Activated CD4-positive, alpha-beta memory T cell treated with anti-CD3 and anti-CD28 coated beads, Interleukin-2, amount 10 ng/mL, durations not matched to agents 7 days and 5 days (primary cell): ENCODE measurements at regions of chr13 and their contacts with region 1.

Region 1: GRCh38 chr13:77480066-77480465 is 55.4 kb upstream of the SCEL start:
- DNase-seq: no peak
- H3K4me3 Mint-ChIP-seq: no peak overlapping the region
- H3K27ac Mint-ChIP-seq: no peak overlapping the region
- H3K4me1 Mint-ChIP-seq: peaks cover 14% of the 10 kb centered on the region
- H3K27me3 Mint-ChIP-seq: peaks cover 12% of the 10 kb centered on the region

Region 2: GRCh38 chr13:77329133-77329910 is 150.7 kb before region 1 on chr13:
- CTCF ChIA-PET with region 1: interaction called, 47 read pairs
- POLR2A ChIA-PET with region 1: interaction called, 31 read pairs
- DNase-seq: peak; percentile 95
- H3K4me3 Mint-ChIP-seq: peak overlapping the region; percentile 95
- H3K27ac Mint-ChIP-seq: peak overlapping the region; percentile 99
- H3K4me1 Mint-ChIP-seq: peaks cover 40% of the 10 kb centered on the region
- H3K27me3 Mint-ChIP-seq: no peaks in the 10 kb centered on the region

Region 3: DNA sequence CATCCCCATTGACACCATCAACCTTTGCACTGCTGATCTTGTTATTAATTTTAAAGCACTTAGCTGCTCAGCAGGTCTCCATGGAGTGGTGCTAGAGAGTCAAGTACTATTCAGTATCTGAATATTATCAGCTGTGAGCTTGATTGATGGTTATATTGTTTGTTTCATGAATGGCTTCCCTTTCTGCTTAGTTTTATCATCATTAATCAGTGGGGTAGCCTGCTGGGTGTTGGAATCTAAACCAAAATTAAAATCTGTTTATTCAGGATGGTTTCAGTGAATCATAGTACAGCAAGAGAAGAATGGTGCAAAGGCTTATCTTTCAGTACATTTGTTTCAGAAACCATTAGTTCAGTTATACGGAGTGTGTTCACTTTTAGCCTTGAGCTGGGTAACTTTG is 12.9 kb after region 1 on chr13:
- CTCF ChIA-PET with region 1: interaction called, 13 read pairs
- POLR2A ChIA-PET with region 1: no interaction called
- DNase-seq: no peak
- H3K4me3 Mint-ChIP-seq: no peak overlapping the region
- H3K27ac Mint-ChIP-seq: no peak overlapping the region
- H3K4me1 Mint-ChIP-seq: peaks cover 3% of the 10 kb centered on the region
- H3K27me3 Mint-ChIP-seq: peaks cover 4% of the 10 kb centered on the region

Region 4: GRCh38 chr13:77715233-77715891 is 235.3 kb after region 1 on chr13:
- CTCF ChIA-PET with region 1: no interaction called
- POLR2A ChIA-PET with region 1: no interaction called
- DNase-seq: no peak
- H3K4me3 Mint-ChIP-seq: no peak overlapping the region
- H3K27ac Mint-ChIP-seq: no peak overlapping the region
- H3K4me1 Mint-ChIP-seq: peaks cover 20% of the 10 kb centered on the region
- H3K27me3 Mint-ChIP-seq: no peaks in the 10 kb centered on the region